ENCODE measurements at regions of chr7 and their contacts with region 1.

Region 1: DNA sequence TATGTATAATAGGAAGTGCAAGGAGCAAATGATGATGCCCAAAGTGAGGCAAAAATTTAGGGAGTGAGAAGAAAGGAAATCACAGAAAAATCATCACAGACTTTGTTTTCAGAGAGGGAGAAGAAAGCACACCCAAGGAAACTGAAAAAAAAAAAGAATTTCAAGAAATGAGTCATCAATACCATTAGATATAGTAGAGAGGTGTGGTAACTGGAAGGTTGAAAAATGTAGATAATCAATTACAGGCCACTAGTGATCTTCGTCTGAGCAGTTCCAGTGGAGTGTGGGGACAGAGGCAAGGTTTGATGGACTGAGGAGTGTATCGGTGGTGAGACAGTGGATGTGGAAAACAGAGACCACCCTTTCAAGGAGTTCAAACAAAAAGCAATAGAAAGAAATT is 31.7 kb downstream of the ASB4 start:
- DNase-seq: no peak
- ATAC-seq: peak; percentile 86
- H3K4me3 ChIP-seq: no peak overlapping the region
- H3K27ac ChIP-seq: no peak overlapping the region
- H3K4me1 ChIP-seq: no peaks in the 10 kb centered on the region
- H3K27me3 ChIP-seq: no peaks in the 10 kb centered on the region
- CTCF ChIP-seq: no peak
- EP300 ChIP-seq: no peak
- POLR2A ChIP-seq: no peak
- RAD21 ChIP-seq: no peak

Region 2: GRCh38 chr7:95491634-95492320 is 25.7 kb before region 1 on chr7:
- CTCF ChIA-PET with region 1: interaction called, 77 read pairs
- POLR2A ChIA-PET with region 1: no interaction called
- RAD21 ChIA-PET with region 1: interaction called, 17 read pairs
- SMC1A ChIA-PET with region 1: interaction called, 38 read pairs
- in situ Hi-C with region 1: no loop called
- intact Hi-C with region 1: no loop called
- DNase-seq: no peak
- ATAC-seq: no peak
- H3K4me3 ChIP-seq: no peak overlapping the region
- H3K27ac ChIP-seq: no peak overlapping the region
- H3K4me1 ChIP-seq: no peaks in the 10 kb centered on the region
- H3K27me3 ChIP-seq: no peaks in the 10 kb centered on the region
- CTCF ChIP-seq: no peak
- EP300 ChIP-seq: no peak
- POLR2A ChIP-seq: no peak
- RAD21 ChIP-seq: no peak

Region 3: GRCh38 chr7:96061844-96062243 is 544.4 kb after region 1 on chr7:
- CTCF ChIA-PET with region 1: no interaction called
- POLR2A ChIA-PET with region 1: no interaction called
- RAD21 ChIA-PET with region 1: no interaction called
- SMC1A ChIA-PET with region 1: no interaction called
- in situ Hi-C with region 1: no loop called
- intact Hi-C with region 1: no loop called
- DNase-seq: no peak
- ATAC-seq: no peak
- H3K4me3 ChIP-seq: no peak overlapping the region
- H3K27ac ChIP-seq: no peak overlapping the region
- H3K4me1 ChIP-seq: no peaks in the 10 kb centered on the region
- H3K27me3 ChIP-seq: no peaks in the 10 kb centered on the region
- CTCF ChIP-seq: no peak
- EP300 ChIP-seq: no peak
- POLR2A ChIP-seq: no peak
- RAD21 ChIP-seq: no peak

Region 4: GRCh38 chr7:96526492-96526891 is 1009.0 kb after region 1 on chr7:
- CTCF ChIA-PET with region 1: no interaction called
- POLR2A ChIA-PET with region 1: no interaction called
- RAD21 ChIA-PET with region 1: no interaction called
- SMC1A ChIA-PET with region 1: no interaction called
- in situ Hi-C with region 1: no loop called
- intact Hi-C with region 1: no loop called
- DNase-seq: no peak
- ATAC-seq: no peak
- H3K4me3 ChIP-seq: no peak overlapping the region
- H3K27ac ChIP-seq: no peak overlapping the region
- H3K4me1 ChIP-seq: no peaks in the 10 kb centered on the region
- H3K27me3 ChIP-seq: no peaks in the 10 kb centered on the region
- CTCF ChIP-seq: no peak
- EP300 ChIP-seq: no peak
- POLR2A ChIP-seq: no peak
- RAD21 ChIP-seq: no peak

Measured in GM12878 (cell line).